B cell (primary cell): ENCODE measurements at regions of chr12 and their contacts with region 1.

Region 1: GRCh38 chr12:98064232-98064900 is 451.0 kb upstream of the TMPO start:
- DNase-seq: no peak
- ATAC-seq: no peak
- H3K4me3 ChIP-seq: no peak overlapping the region
- H3K4me3 Mint-ChIP-seq: no peak overlapping the region
- H3K27ac ChIP-seq: no peak overlapping the region
- H3K27ac Mint-ChIP-seq: no peak overlapping the region
- H3K4me1 ChIP-seq: no peaks in the 10 kb centered on the region
- H3K4me1 Mint-ChIP-seq: no peaks in the 10 kb centered on the region
- H3K27me3 ChIP-seq: no peaks in the 10 kb centered on the region
- H3K27me3 Mint-ChIP-seq: no peaks in the 10 kb centered on the region
- CTCF ChIP-seq: no peak

Region 2: DNA sequence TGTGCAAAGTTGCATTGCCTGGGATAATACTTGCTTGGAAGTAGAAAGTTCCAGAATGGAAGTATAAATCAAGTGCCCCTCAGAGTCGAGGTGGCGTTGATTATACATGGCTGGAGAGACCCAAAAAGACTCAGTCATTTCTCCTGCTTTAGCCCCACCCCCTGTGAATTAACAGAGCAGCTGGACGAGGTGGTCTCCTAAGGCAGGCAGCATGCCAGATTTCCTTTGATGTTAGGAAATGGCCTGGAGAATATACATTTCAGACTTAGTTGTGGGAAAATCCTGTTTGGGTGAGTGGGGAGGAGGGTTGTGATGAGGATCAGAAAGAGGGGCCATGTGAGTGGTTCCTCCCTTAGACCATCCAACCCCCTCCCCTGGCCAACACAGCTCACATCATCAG is 44.9 kb after region 1 on chr12:
- CTCF ChIA-PET with region 1: no interaction called
- POLR2A ChIA-PET with region 1: no interaction called
- intact Hi-C with region 1: loop called (anchors 1 kb)
- DNase-seq: no peak
- ATAC-seq: no peak
- H3K4me3 ChIP-seq: no peak overlapping the region
- H3K4me3 Mint-ChIP-seq: no peak overlapping the region
- H3K27ac ChIP-seq: no peak overlapping the region
- H3K27ac Mint-ChIP-seq: no peak overlapping the region
- H3K4me1 ChIP-seq: no peaks in the 10 kb centered on the region
- H3K4me1 Mint-ChIP-seq: no peaks in the 10 kb centered on the region
- H3K27me3 ChIP-seq: no peaks in the 10 kb centered on the region
- H3K27me3 Mint-ChIP-seq: no peaks in the 10 kb centered on the region
- CTCF ChIP-seq: no peak